HCT116 (cell line): ENCODE measurements at regions of chr2 and their contacts with region 1.

Region 1: DNA sequence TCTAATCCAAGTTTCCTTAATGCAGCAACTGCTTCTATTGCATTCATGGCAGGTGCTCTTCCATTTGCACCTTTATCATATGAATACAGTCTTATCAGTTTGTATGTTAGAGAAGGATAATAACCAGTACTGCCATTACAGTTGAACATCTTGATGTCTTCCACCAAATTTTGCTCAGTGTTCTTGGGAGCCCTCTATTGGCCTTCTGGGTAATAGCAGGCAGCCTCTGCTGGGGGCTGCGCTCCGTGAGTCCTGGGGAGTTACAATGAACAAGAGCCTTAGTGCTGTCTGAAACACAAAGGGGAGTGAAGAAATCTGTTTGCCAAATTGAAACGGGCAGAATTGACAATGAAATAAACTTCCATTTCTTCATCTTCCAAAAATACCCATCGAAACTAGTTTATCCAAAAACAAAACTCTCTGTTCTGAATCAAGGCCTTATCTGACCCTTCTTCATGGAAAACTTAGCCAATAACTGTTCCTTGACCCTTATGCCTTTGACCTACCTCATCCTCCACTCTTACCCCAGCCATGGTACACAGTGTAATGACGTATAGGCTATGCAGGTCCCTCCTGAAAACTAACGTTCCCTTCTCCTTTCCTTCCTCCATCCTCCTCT is 79.9 kb downstream of the ALK start:
- DNase-seq: peak; percentile 3
- ATAC-seq: peak; percentile 78
- H3K4me3 ChIP-seq: no peak overlapping the region
- H3K27ac ChIP-seq: no peak overlapping the region
- H3K4me1 ChIP-seq: no peaks in the 10 kb centered on the region
- H3K27me3 ChIP-seq: peaks cover 54% of the 10 kb centered on the region
- CTCF ChIP-seq: peak; percentile 48 to 90 (median 86); a peak in 5 of 6 replicates
- POLR2A ChIP-seq: no peak
- RAD21 ChIP-seq: peak; percentile 77

Region 2: DNA sequence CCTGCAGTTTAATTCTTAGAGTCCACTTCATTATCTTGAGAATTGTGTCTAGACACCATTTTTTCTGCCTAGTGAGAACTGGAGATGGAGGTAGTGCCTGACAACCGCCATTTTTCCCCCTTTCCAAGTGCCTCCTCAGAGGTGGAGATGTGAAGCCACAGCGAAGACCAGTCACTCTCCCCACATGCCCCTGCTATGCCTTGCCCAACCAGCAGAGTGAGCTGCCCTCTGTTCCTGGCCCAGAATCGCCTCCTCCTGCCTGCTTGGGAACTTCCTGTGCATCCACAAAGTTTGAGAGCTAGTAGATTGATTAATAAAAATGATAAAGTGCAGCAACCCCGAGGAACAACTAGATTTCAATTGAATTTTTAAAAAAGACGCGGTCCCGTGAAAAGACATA is 603.0 kb before region 1 on chr2:
- CTCF ChIA-PET with region 1: no interaction called
- POLR2A ChIA-PET with region 1: no interaction called
- RAD21 ChIA-PET with region 1: no interaction called
- intact Hi-C with region 1: loop called (anchors 2 kb)
- DNase-seq: peak; percentile 26
- ATAC-seq: peak; percentile 96
- H3K4me3 ChIP-seq: no peak overlapping the region
- H3K27ac ChIP-seq: no peak overlapping the region
- H3K4me1 ChIP-seq: no peaks in the 10 kb centered on the region
- H3K27me3 ChIP-seq: peaks cover 57% of the 10 kb centered on the region; the same call in 1 of the 2 replicates
- CTCF ChIP-seq: peak; percentile 58 to 91 (median 85); a peak in 5 of 6 replicates
- POLR2A ChIP-seq: no peak
- RAD21 ChIP-seq: peak; percentile 83

Region 3: GRCh38 chr2:29295857-29296256 is 545.6 kb before region 1 on chr2:
- CTCF ChIA-PET with region 1: no interaction called
- POLR2A ChIA-PET with region 1: no interaction called
- RAD21 ChIA-PET with region 1: no interaction called
- intact Hi-C with region 1: loop called (anchors 5 kb)
- DNase-seq: peak; percentile 18
- ATAC-seq: peak; percentile 78
- H3K4me3 ChIP-seq: no peak overlapping the region
- H3K27ac ChIP-seq: no peak overlapping the region
- H3K4me1 ChIP-seq: no peaks in the 10 kb centered on the region
- H3K27me3 ChIP-seq: peaks cover 77% of the 10 kb centered on the region
- CTCF ChIP-seq: peak; percentile 25 to 47 (median 34); a peak in 4 of 6 replicates
- POLR2A ChIP-seq: no peak
- RAD21 ChIP-seq: peak; percentile 61

Region 4: GRCh38 chr2:29638641-29639040 is 202.9 kb before region 1 on chr2:
- CTCF ChIA-PET with region 1: no interaction called
- POLR2A ChIA-PET with region 1: no interaction called
- RAD21 ChIA-PET with region 1: no interaction called
- intact Hi-C with region 1: loop called (anchors 5 kb)
- DNase-seq: no peak
- ATAC-seq: no peak
- H3K4me3 ChIP-seq: no peak overlapping the region
- H3K27ac ChIP-seq: no peak overlapping the region
- H3K4me1 ChIP-seq: no peaks in the 10 kb centered on the region
- H3K27me3 ChIP-seq: peaks cover 52% of the 10 kb centered on the region
- CTCF ChIP-seq: no peak
- POLR2A ChIP-seq: no peak
- RAD21 ChIP-seq: no peak

Region 5: GRCh38 chr2:29923110-29923721 is 81.7 kb after region 1 on chr2:
- CTCF ChIA-PET with region 1: no interaction called
- POLR2A ChIA-PET with region 1: no interaction called
- RAD21 ChIA-PET with region 1: no interaction called
- intact Hi-C with region 1: no loop called
- DNase-seq: peak; percentile 42
- ATAC-seq: peak; percentile 87
- H3K4me3 ChIP-seq: no peak overlapping the region
- H3K27ac ChIP-seq: no peak overlapping the region
- H3K4me1 ChIP-seq: no peaks in the 10 kb centered on the region
- H3K27me3 ChIP-seq: peaks cover 17% of the 10 kb centered on the region
- CTCF ChIP-seq: peak; percentile 74 to 92 (median 88)
- POLR2A ChIP-seq: no peak
- RAD21 ChIP-seq: peak; percentile 76